CD8-positive, alpha-beta T cell (primary cell): ENCODE measurements at regions of chr7 and their contacts with region 1.

Region 1: DNA sequence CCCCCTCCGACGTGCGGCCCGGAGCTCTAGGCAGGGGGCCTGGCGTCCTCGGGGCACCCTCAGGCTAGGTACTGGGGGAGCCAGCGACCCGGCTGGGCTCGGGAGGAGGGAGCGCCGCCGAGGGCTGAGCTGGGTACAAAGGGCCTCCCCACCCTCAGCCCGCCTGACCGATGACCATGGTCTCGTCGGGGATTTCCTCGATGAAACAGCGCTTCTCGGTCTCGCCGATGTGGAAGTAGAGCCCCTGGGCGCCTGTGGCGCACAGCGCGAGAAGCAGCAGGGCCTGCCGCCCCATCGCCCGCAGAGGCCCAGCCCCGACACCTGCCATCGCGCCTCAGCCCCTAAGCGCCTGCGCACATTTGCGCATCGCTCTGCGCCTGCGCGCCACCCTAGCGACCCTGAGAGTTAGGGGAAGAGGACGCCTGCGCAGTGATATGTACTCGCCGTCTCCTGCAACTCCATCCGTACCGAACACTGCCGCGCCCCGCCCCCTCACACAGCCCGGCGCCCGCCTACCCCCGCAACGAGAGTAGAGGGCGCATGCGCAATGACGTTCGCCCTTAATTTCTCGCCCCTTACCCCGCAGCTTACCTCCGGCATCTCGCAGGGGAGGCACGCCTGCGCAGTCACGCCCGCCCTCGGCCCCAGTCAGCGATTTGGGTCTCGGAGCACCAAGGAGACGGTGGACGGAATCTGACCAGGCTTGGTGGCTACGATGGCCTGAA is at the start of gene TMED4:
- DNase-seq: peak; percentile 100
- ATAC-seq: peak; percentile 93
- H3K4me3 ChIP-seq: peak within 1 kb of the TSS; percentile 76 to 79
- H3K4me3 Mint-ChIP-seq: peak within 1 kb of the TSS; percentile 93
- H3K27ac ChIP-seq: peak within 1 kb of the TSS; percentile 92 to 96
- H3K27ac Mint-ChIP-seq: peak within 1 kb of the TSS; percentile 98
- H3K4me1 ChIP-seq: peaks cover 26% of the 10 kb centered on the region
- H3K4me1 Mint-ChIP-seq: peaks cover 33% of the 10 kb centered on the region
- H3K27me3 ChIP-seq: no peaks in the 10 kb centered on the region
- H3K27me3 Mint-ChIP-seq: no peaks in the 10 kb centered on the region
- CTCF ChIP-seq: no peak
- total RNA-seq, gene TMED4: 115 to 120 TPM

Region 2: DNA sequence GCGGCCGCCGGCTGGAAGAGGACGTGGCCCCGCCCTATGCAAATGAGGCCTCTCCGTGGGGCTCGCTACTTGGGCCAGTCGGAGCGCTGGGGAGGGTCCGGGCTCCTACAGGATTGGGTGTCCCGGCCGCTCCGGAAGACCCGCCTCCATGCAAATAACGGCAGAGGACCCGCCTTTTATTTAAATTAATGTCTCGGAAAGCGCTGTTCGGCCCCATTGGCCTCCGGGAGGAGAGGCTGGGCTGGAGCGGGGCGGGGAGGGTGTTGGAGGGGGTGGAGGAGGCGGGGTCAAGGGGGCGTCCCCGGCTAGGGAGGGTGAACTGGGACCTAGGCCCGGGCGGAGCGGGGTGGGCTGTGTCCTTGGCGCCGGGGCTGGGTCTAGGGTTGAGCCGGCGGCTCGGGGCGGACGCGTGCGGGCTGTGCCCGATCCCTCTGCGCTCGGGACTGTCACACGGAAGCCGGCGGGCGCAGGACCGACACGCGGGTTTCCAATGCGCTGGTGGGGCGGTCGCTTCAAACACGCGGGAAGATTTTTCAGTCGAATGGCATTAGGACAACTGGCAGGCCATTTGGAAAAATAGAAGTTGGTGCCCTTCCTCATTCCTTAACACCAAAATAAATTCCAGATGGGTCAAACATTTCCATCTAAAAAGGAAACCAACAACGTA is 499.4 kb before region 1 on chr7:
- CTCF ChIA-PET with region 1: no interaction called
- POLR2A ChIA-PET with region 1: no interaction called
- intact Hi-C with region 1: loop called (anchors 5 kb)
- DNase-seq: peak; percentile 94 to 100 (median 97)
- ATAC-seq: peak; percentile 93
- H3K4me3 ChIP-seq: peak overlapping the region; percentile 51 to 63
- H3K4me3 Mint-ChIP-seq: peak overlapping the region; percentile 88
- H3K27ac ChIP-seq: peak overlapping the region; percentile 54 to 78
- H3K27ac Mint-ChIP-seq: peak overlapping the region; percentile 82
- H3K4me1 ChIP-seq: peaks cover 26% of the 10 kb centered on the region
- H3K4me1 Mint-ChIP-seq: peaks cover 33% of the 10 kb centered on the region
- H3K27me3 ChIP-seq: no peaks in the 10 kb centered on the region
- H3K27me3 Mint-ChIP-seq: no peaks in the 10 kb centered on the region
- CTCF ChIP-seq: no peak

Region 3: GRCh38 chr7:44200647-44201461 is 381.2 kb before region 1 on chr7 and contains the start of gene YKT6:
- CTCF ChIA-PET with region 1: no interaction called
- POLR2A ChIA-PET with region 1: no interaction called
- intact Hi-C with region 1: loop called in 1 of 2 experiments (anchors 5 kb)
- DNase-seq: peak; percentile 84 to 98 (median 95)
- ATAC-seq: peak; percentile 98
- H3K4me3 ChIP-seq: peak within 1 kb of the TSS; percentile 72 to 97
- H3K4me3 Mint-ChIP-seq: peak within 1 kb of the TSS; percentile 81
- H3K27ac ChIP-seq: peak within 1 kb of the TSS; percentile 65 to 78
- H3K27ac Mint-ChIP-seq: peak within 1 kb of the TSS; percentile 80
- H3K4me1 ChIP-seq: peaks cover 13% of the 10 kb centered on the region
- H3K4me1 Mint-ChIP-seq: peaks cover 34% of the 10 kb centered on the region
- H3K27me3 ChIP-seq: no peaks in the 10 kb centered on the region
- H3K27me3 Mint-ChIP-seq: peaks cover 5% of the 10 kb centered on the region
- CTCF ChIP-seq: peak; percentile 43
- total RNA-seq, gene YKT6: 111 to 114 TPM

Region 4: GRCh38 chr7:44606450-44607254 is 24.6 kb after region 1 on chr7 and contains the start of gene OGDH:
- CTCF ChIA-PET with region 1: interaction called, 4 read pairs
- POLR2A ChIA-PET with region 1: interaction called, 38 read pairs
- intact Hi-C with region 1: loop called (anchors 1 kb)
- DNase-seq: peak; percentile 98 to 100 (median 99)
- ATAC-seq: peak; percentile 92
- H3K4me3 ChIP-seq: peak within 1 kb of the TSS; percentile 87 to 90
- H3K4me3 Mint-ChIP-seq: peak within 1 kb of the TSS; percentile 99
- H3K27ac ChIP-seq: peak within 1 kb of the TSS; percentile 96 to 98
- H3K27ac Mint-ChIP-seq: peak within 1 kb of the TSS; percentile 100
- H3K4me1 ChIP-seq: peaks cover 30% of the 10 kb centered on the region
- H3K4me1 Mint-ChIP-seq: peaks cover 34% of the 10 kb centered on the region
- H3K27me3 ChIP-seq: no peaks in the 10 kb centered on the region
- H3K27me3 Mint-ChIP-seq: no peaks in the 10 kb centered on the region
- CTCF ChIP-seq: no peak
- total RNA-seq, gene OGDH: 36.8 to 39.6 TPM

Region 5: DNA sequence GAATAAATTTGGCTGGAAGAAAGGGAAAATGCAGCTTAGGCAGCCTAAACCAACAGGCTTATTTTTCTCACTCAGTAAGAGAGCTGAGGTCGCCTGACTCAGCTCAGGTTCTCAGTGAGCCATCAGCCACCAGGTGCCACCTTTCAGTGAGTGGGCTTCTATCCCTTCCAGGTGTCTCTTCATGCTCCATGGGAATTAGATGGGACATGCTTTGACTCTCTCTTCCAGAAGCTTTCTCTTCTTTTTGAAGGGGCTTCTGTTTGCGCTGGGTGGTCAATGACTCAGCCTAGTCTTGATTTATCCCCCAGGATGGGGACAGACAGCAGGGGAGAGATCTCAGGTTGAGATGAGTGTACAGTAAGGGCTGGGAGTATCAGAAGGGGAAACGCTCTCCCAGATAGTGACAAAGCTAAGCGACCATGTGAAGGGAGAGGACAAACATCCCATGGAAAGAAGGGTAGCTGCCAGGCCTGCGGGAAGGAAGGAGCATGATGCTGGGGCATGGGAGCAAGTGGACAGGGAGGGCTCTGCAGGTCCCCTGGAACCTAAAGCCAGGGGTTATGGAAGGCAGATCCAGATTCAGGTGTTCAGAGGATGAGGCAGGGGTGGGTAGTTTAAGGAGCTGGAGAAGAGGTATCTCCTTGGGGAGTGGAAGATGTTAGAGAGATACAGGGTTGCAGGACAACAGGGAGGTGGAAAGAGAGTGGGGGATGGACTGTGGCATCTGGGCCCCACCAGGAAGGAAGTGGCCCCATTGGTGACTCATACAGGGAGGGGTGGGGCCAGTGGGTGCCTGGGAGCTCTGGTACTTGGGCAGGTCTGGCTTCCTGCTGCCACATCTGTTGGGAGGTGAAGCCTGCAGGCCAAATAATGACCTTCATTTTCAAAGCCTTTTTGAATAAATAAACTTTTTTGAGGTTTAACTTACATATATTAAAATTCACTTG is 56.8 kb after region 1 on chr7:
- CTCF ChIA-PET with region 1: no interaction called
- POLR2A ChIA-PET with region 1: interaction called, 3 read pairs
- intact Hi-C with region 1: loop called (anchors 1 to 2 kb)
- DNase-seq: peak; percentile 58 to 91 (median 82)
- ATAC-seq: peak; percentile 56
- H3K4me3 ChIP-seq: peak overlapping the region in 1 of 2 experiments; percentile 9
- H3K4me3 Mint-ChIP-seq: peak overlapping the region; percentile 75
- H3K27ac ChIP-seq: peak overlapping the region; percentile 73 to 97
- H3K27ac Mint-ChIP-seq: peak overlapping the region; percentile 99
- H3K4me1 ChIP-seq: peaks cover 59% of the 10 kb centered on the region
- H3K4me1 Mint-ChIP-seq: peaks cover 66% of the 10 kb centered on the region
- H3K27me3 ChIP-seq: no peaks in the 10 kb centered on the region
- H3K27me3 Mint-ChIP-seq: no peaks in the 10 kb centered on the region
- CTCF ChIP-seq: no peak

Region 6: DNA sequence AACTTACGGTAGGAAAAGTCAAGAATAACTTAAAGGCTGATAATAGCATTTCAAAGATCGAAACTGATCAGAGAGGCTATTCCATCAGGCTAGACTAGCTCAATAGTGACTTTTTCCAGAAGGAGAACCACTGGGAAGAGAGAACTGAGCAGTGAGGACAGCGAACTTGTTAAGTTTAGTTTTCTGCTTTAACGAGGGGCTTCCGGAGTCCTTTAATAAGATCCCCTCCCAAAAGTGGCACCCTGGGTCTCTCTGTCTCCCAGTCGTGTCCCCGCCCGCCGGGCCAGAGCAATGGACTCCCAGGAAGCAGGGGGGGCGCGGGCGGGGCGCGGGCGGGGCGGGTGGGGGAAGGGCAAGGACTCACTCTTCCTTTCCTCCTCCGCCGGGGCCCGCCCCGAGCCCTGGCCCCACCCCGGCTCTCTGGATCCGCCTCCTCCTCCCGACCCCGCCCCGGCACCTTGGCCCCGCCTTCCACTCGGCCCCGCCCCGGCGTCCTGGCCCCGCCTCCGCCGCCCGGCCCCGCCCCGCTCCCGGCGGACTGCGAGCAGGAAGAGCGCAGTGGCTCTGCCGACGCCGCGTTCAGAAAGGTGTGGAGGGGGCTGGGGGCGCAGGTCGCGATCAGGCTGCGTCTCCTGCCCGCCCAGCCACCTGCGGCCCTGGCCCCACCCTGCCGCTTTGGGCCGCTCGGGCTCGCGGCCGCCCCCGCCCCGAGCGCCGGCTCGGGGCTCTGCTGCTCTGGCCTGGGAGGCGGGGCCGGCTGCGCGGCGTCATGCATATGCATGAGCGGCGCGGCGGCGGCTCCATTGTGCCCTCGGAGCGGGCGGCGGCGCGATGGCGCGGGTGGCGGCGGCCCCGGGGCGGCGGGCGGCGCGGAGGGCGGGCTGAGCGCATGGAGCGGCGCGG is 166.3 kb after region 1 on chr7 and contains the start of gene ZMIZ2:
- CTCF ChIA-PET with region 1: no interaction called
- POLR2A ChIA-PET with region 1: interaction called, 12 read pairs
- intact Hi-C with region 1: loop called (anchors 1 to 2 kb)
- DNase-seq: peak; percentile 84 to 98 (median 92)
- ATAC-seq: peak; percentile 91
- H3K4me3 ChIP-seq: peak within 1 kb of the TSS; percentile 77 to 80
- H3K4me3 Mint-ChIP-seq: peak within 1 kb of the TSS; percentile 79
- H3K27ac ChIP-seq: peak within 1 kb of the TSS; percentile 83
- H3K27ac Mint-ChIP-seq: peak within 1 kb of the TSS; percentile 90
- H3K4me1 ChIP-seq: peaks cover 27% of the 10 kb centered on the region
- H3K4me1 Mint-ChIP-seq: peaks cover 35% of the 10 kb centered on the region
- H3K27me3 ChIP-seq: no peaks in the 10 kb centered on the region
- H3K27me3 Mint-ChIP-seq: no peaks in the 10 kb centered on the region
- CTCF ChIP-seq: no peak
- total RNA-seq, gene ZMIZ2: 67.1 to 71.3 TPM

Region 7: DNA sequence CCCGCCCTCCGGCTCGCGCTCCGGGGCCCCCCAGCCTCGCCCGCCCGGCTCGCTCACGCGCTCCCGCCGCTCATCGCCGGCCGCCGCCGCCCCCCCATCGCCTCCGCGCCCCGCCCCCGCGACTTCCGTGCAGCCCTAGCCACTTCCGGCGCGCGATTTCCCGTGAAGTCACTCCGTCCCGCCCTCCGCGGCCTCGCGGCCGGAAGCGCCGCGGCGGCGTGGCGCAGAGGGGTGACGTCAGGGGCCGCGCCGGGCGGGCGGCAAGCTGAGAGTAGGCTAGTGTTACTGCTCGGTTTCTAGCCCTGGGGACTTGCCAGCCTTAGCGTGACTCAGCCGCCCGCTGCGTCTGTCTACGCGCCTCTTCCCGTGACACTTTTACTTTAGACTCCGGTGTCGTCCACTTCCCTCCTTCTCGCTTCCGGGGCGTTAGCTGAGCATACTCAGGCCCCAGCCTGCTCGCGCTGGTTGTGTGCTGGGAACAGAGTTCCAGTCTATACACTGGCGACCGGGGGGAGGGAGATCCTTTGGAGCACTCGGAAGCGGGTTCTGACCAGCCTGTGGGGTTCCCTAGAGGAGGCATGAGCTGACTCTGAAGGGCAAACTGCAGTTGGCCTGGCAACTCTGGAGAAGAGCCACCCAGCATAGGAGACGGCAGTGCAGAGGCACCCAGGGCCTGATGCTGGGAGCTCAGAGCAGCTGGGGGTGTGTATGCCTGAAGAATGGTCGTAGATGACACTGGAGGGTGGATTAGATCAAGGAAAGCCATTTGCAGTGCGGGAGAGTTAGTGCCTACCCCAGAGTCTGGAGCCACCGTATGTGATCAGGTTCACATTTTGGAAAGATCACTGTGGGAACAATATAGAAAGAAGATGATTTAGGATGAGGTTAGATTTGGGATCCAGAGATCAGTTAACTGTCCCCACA is 303.6 kb after region 1 on chr7 and contains the start of gene PURB:
- CTCF ChIA-PET with region 1: interaction called, 4 read pairs
- POLR2A ChIA-PET with region 1: interaction called, 10 read pairs
- intact Hi-C with region 1: loop called in 1 of 2 experiments (anchors 1 kb)
- DNase-seq: peak; percentile 94 to 99 (median 97)
- ATAC-seq: peak; percentile 86
- H3K4me3 ChIP-seq: peak within 1 kb of the TSS; percentile 64 to 67
- H3K4me3 Mint-ChIP-seq: peak within 1 kb of the TSS; percentile 92
- H3K27ac ChIP-seq: peak within 1 kb of the TSS; percentile 98 to 100
- H3K27ac Mint-ChIP-seq: peak within 1 kb of the TSS; percentile 99
- H3K4me1 ChIP-seq: peaks cover 36% of the 10 kb centered on the region
- H3K4me1 Mint-ChIP-seq: peaks cover 45% of the 10 kb centered on the region
- H3K27me3 ChIP-seq: no peaks in the 10 kb centered on the region
- H3K27me3 Mint-ChIP-seq: no peaks in the 10 kb centered on the region
- CTCF ChIP-seq: no peak
- total RNA-seq, gene PURB: 16.3 to 16.5 TPM